ENCODE measurements at regions of chr17 and their contacts with region 1.

Region 1: DNA sequence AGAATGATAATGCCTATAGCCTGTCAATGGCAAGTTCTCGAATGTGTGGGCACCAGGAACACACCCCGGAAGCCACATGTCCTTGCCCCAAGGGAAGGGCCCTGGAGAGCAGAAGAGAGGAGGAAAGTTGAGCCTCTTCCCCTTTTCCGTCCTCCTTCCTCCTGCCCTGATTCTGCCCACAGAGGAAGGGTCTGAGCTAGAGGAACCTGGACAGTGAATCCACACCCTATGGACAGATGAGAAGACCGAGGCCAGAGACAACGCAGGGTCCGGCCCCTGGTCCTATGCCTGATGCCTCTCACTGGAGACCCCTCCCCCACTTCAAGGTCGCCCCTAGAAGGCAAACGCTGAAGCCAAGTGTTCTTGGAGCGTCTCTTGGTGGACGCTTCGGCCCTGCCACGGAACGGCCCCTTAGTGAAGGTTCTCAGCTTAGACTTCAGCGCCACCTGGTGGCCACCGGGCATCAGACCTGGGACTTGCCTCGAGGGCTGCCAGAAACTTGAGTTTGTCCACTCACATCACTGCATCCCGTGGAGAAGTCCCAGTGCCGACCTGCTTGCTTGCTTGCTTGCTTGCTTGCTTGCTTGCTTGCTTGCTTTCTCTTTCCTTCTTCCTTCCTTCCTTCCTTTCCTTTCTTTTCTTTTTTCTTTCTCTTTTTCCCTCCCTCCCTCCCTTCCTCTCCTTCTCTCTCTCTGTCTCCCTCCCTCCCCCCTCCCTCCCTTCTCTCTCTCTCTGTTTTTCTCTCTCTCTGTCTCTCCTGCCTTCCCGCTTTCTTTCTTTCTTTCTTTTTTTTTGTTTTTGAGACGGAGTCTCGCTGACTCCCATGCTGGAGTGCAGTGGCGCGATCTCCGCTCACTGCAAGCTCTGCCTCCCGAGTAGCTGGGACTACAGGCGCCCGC is 20.6 kb upstream of the SPNS3 start:
- DNase-seq: peak; percentile 79
- H3K4me3 ChIP-seq: no peak overlapping the region
- H3K27ac ChIP-seq: no peak overlapping the region
- H3K27me3 ChIP-seq: no peaks in the 10 kb centered on the region
- CTCF ChIP-seq: peak; percentile 87

Region 2: GRCh38 chr17:4199818-4200402 is 213.3 kb before region 1 on chr17:
- CTCF ChIA-PET with region 1: interaction called, 35 read pairs
- POLR2A ChIA-PET with region 1: no interaction called
- DNase-seq: no peak
- H3K4me3 ChIP-seq: no peak overlapping the region
- H3K27ac ChIP-seq: no peak overlapping the region
- H3K27me3 ChIP-seq: no peaks in the 10 kb centered on the region
- CTCF ChIP-seq: peak; percentile 83

Region 3: DNA sequence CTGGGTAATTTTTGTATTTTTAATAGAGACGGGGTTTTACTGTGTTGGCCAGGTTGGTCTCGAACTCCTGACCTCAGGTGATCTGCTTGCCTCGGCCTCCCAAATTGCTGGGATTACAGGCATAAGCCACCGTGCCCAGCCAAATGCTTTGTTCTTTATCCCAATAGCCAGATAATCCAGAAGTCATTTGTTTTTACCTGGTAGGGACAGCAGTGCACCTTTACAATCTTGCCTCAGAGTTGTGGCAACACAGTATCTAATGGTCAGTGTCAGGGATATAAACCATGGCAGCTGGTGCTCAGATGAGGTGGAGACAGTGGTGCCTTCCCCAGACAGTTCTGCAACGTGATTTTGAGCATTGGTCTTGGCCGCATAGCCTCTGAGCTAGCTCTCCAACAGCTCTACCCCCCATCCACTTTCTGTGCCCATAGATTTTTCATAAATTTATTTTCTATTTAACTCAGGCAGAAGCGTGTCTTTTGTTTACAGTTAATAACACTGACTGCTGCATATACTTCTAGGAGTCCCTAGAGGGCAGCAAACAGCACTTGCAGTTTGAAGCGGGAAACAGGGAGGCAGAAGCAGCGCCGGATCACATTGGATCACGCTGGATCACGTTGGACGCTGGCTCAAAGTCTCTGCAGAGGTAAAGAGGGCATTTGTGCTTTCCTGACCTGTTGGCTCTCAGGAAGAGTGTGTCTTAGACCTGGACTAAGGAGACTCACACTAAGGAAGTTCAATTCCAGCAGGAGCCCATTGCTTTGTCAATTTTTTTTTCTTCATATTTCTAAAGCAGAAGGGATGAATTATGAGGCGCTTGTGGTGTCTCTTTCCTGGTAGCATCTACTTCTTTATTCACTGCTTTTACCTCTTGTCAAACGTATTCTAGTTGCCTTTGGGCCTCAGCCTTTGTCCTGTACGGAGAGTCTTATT is 152.3 kb after region 1 on chr17:
- CTCF ChIA-PET with region 1: no interaction called
- POLR2A ChIA-PET with region 1: no interaction called
- DNase-seq: peak; percentile 38
- H3K4me3 ChIP-seq: no peak overlapping the region
- H3K27ac ChIP-seq: no peak overlapping the region
- H3K27me3 ChIP-seq: peaks cover 17% of the 10 kb centered on the region
- CTCF ChIP-seq: peak; percentile 93

Measured in AG04450 (cell line).